ENCODE measurements at regions of chr16 and their contacts with region 1.

Region 1: GRCh38 chr16:50024684-50025536 is at the start of gene CNEP1R1:
- DNase-seq: peak; percentile 98
- H3K4me3 ChIP-seq: peak within 1 kb of the TSS; percentile 86 to 94 (median 93)
- H3K27ac ChIP-seq: peak within 1 kb of the TSS; percentile 8
- H3K4me1 ChIP-seq: peaks cover 13% of the 10 kb centered on the region
- H3K27me3 ChIP-seq: peaks cover 2 to 6% of the 10 kb centered on the region in 2 experiments
- CTCF ChIP-seq: peak; percentile 99 to 100
- POLR2A ChIP-seq: peak; percentile 63
- total RNA-seq, gene CNEP1R1: 21.7 and 23.2 TPM in 2 replicates

Region 2: DNA sequence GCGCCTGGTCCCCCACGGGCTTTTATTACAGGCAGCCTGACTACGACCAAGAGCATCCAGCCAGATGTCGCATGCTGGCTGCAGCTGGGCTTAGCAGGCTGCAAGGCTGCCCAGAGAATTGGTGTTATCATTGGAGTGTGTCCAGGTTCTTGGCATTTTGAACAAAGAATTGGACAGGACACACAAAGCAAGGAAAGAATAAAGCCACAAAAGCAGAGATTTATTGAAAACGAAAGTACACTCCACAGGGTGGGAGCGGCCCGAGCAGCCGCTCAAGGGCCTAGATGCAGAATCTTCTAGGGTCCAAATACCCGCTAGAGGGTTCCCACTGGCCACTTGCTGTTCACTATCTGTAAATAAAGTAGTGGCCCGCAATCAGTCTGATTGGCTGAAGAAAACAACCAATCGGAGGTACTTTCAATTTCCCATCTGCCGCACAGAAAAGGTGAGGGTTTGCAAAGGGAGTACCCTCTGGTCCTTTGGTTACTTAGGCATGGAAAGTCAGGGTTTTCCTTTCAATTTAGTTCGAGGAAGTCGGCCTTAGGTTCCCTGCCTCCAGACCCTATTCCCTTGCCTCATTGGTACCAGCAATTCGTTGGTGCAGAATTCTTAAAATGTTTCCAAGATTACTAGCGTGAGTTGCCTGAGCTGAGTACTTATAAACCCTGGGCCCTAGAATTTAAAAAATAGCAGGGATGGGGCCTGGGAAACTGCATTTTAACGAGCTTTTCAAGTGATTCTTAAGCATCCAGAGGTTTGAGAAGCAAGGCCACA is 38.4 kb before region 1 on chr16:
- CTCF ChIA-PET with region 1: interaction called, 5 read pairs
- POLR2A ChIA-PET with region 1: no interaction called
- dilution Hi-C with region 1: no loop called
- intact Hi-C with region 1: loop called (anchors 2 kb)
- DNase-seq: peak; percentile 82
- H3K4me3 ChIP-seq: peak overlapping the region; percentile 28 to 65 (median 59)
- H3K27ac ChIP-seq: no peak overlapping the region
- H3K4me1 ChIP-seq: no peaks in the 10 kb centered on the region
- H3K27me3 ChIP-seq: no peaks in the 10 kb centered on the region
- CTCF ChIP-seq: no peak
- POLR2A ChIP-seq: no peak

Region 3: GRCh38 chr16:50038756-50039529 is 14.0 kb after region 1 on chr16:
- CTCF ChIA-PET with region 1: interaction called, 22 read pairs
- POLR2A ChIA-PET with region 1: no interaction called
- dilution Hi-C with region 1: no loop called
- intact Hi-C with region 1: no loop called
- DNase-seq: no peak
- H3K4me3 ChIP-seq: no peak overlapping the region
- H3K27ac ChIP-seq: no peak overlapping the region
- H3K4me1 ChIP-seq: no peaks in the 10 kb centered on the region
- H3K27me3 ChIP-seq: no peaks in the 10 kb centered on the region
- CTCF ChIP-seq: no peak
- POLR2A ChIP-seq: no peak

Region 4: DNA sequence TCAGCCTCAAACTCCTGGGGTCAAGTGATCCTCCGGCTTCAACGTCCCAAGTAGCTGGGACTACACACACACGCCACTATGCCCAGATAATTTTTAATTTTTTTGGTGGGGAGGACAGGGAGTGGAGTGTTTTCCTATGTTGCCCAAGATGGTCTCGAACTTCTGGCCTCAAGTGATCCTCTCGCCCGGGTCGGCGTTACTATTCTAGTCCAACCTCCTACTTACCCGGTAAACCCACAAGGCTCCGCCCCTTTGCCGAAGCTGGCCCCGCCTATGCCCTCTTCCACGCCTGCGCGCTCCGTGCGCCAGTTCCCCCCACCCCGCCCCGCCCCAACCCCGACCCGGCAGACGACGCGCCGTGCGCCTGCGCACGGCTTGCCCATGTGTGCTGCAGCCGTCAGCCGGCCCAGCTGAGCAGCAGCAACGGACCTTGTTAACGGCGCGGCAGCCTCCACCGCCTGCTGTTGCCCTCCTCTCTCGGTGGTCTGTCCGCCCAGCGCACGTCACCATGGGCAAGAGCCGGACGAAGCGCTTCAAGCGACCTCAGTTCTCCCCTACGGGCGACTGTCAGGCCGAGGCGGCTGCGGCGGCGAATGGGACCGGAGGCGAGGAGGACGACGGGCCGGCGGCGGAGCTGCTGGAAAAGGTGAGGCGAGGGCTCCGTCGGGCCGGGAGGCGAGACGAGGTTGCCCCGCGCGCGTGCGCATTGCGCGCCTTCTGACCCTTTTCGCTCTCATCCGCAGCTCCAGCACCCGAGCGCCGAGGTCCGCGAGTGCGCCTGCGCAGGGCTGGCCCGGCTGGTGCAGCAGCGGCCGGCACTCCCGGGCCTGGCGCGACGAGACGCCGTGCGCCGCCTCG is 40.9 kb after region 1 on chr16 and contains the start of gene HEATR3:
- CTCF ChIA-PET with region 1: interaction called, 29 read pairs
- POLR2A ChIA-PET with region 1: interaction called, 3 read pairs
- dilution Hi-C with region 1: no loop called
- intact Hi-C with region 1: loop called (anchors 1 kb)
- DNase-seq: peak; percentile 95
- H3K4me3 ChIP-seq: peak within 1 kb of the TSS; percentile 76 to 82 (median 76)
- H3K27ac ChIP-seq: peak within 1 kb of the TSS; percentile 67
- H3K4me1 ChIP-seq: peaks cover 27% of the 10 kb centered on the region
- H3K27me3 ChIP-seq: no peaks in the 10 kb centered on the region
- CTCF ChIP-seq: no peak
- POLR2A ChIP-seq: peak; percentile 39
- total RNA-seq, gene HEATR3: 17.0 and 23.1 TPM in 2 replicates

Region 5: GRCh38 chr16:50268374-50268773 is 243.5 kb after region 1 on chr16:
- CTCF ChIA-PET with region 1: no interaction called
- POLR2A ChIA-PET with region 1: no interaction called
- dilution Hi-C with region 1: no loop called
- intact Hi-C with region 1: no loop called
- DNase-seq: no peak
- H3K4me3 ChIP-seq: no peak overlapping the region
- H3K27ac ChIP-seq: no peak overlapping the region
- H3K4me1 ChIP-seq: peaks cover 14% of the 10 kb centered on the region
- H3K27me3 ChIP-seq: no peaks in the 10 kb centered on the region
- CTCF ChIP-seq: no peak
- POLR2A ChIP-seq: no peak

Region 6: GRCh38 chr16:50354629-50355456 is 329.9 kb after region 1 on chr16:
- CTCF ChIA-PET with region 1: interaction called, 37 read pairs
- POLR2A ChIA-PET with region 1: interaction called, 4 read pairs
- dilution Hi-C with region 1: no loop called
- intact Hi-C with region 1: no loop called
- DNase-seq: peak; percentile 33
- H3K4me3 ChIP-seq: no peak overlapping the region
- H3K27ac ChIP-seq: no peak overlapping the region
- H3K4me1 ChIP-seq: no peaks in the 10 kb centered on the region
- H3K27me3 ChIP-seq: no peaks in the 10 kb centered on the region
- CTCF ChIP-seq: peak; percentile 25 to 37
- POLR2A ChIP-seq: no peak

Region 7: DNA sequence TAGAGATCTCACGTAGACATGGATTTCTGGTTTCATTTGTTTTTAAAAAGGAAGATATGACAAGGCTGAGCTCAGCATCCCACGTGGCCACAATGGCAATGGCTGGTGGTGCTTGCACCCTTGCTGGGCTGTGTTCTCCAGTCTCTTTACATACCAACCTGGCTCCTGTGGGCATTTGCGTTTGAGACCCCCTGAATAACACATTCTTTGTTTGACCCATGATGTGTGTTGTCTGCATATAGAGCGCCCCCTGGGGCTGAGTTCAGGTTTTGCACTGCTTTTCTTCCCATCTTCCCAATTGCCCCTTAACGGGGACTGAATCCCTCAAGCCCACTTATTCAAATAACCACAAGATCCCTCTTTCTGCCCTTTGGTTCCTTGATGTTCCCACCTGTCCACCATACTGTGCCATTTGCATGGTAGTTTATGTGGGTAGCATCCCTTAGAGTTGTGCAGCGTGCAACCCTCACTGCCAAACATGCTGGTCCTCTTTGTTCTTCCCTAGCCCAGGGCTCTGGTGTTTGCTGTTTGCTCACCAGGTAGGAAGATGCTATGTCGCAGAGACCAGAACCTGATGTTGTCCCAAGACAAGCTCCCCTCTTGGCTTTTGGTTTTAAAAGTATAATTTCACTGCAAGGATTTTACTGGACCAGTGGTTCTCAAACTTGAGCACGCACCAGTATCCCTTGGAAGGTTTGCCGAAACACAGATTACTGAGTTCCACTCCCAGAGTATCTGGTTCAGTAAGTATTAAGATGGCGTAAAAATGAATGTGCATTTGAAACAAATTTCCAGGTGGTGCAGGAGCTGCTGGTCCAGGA is 484.8 kb after region 1 on chr16:
- CTCF ChIA-PET with region 1: interaction called, 7 read pairs
- POLR2A ChIA-PET with region 1: no interaction called
- dilution Hi-C with region 1: no loop called
- intact Hi-C with region 1: loop called (anchors 1 kb)
- DNase-seq: peak; percentile 42
- H3K4me3 ChIP-seq: no peak overlapping the region
- H3K27ac ChIP-seq: no peak overlapping the region
- H3K4me1 ChIP-seq: no peaks in the 10 kb centered on the region
- H3K27me3 ChIP-seq: no peaks in the 10 kb centered on the region
- CTCF ChIP-seq: peak; percentile 66 to 69
- POLR2A ChIP-seq: no peak

Measured in endothelial cell of umbilical vein (primary cell).